ENCODE measurements at regions of chr18 and their contacts with region 1.

Region 1: GRCh38 chr18:62751341-62751821 is 36.0 kb downstream of the PHLPP1 start:
- DNase-seq: no peak
- H3K4me3 Mint-ChIP-seq: peak overlapping the region; percentile 28
- H3K27ac Mint-ChIP-seq: peak overlapping the region; percentile 68
- H3K4me1 Mint-ChIP-seq: peaks cover 47% of the 10 kb centered on the region
- H3K27me3 Mint-ChIP-seq: no peaks in the 10 kb centered on the region
- CTCF ChIP-seq: no peak

Region 2: GRCh38 chr18:62529597-62529996 is 221.8 kb before region 1 on chr18:
- CTCF ChIA-PET with region 1: no interaction called
- intact Hi-C with region 1: no loop called
- DNase-seq: no peak
- H3K4me3 Mint-ChIP-seq: peak overlapping the region; percentile 84
- H3K27ac Mint-ChIP-seq: peak overlapping the region; percentile 66
- H3K4me1 Mint-ChIP-seq: peaks cover 60% of the 10 kb centered on the region
- H3K27me3 Mint-ChIP-seq: no peaks in the 10 kb centered on the region
- CTCF ChIP-seq: no peak

Region 3: GRCh38 chr18:62736077-62736855 is 15.1 kb before region 1 on chr18:
- CTCF ChIA-PET with region 1: no interaction called
- intact Hi-C with region 1: loop called (anchors 2 kb)
- DNase-seq: no peak
- H3K4me3 Mint-ChIP-seq: no peak overlapping the region
- H3K27ac Mint-ChIP-seq: no peak overlapping the region
- H3K4me1 Mint-ChIP-seq: peaks cover 34% of the 10 kb centered on the region
- H3K27me3 Mint-ChIP-seq: no peaks in the 10 kb centered on the region
- CTCF ChIP-seq: no peak

Measured in Calu3 (cell line).